ENCODE measurements at regions of chr3 and their contacts with region 1.

Region 1: DNA sequence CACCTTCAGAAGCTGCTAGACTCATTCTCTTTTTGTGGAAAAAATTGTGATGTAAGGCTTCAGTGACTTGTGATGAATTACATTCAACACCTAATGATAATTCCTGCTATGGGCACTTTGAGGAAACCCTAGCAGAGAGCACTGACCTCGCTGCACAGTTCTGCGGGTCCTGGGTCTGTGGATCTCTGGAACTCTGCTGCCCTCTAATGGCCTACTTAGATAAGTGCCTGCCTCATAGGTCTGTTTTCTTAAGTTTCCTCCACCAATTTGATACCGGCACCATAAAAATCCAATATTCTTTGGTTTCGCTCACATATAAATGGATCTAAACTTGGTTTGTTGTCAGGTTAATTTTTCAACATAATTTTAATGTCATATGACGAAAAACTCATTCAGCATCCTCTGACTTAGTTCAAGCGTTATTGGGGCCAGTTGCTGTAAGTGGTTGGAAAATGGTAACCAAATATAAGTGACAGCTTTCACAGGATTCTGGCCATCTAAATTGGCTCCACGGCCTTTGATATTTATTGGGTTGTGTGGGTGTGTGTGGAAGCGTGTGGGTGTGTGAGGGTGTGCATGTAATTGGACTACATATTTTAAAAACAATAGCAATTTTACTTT is 10.4 kb downstream of the SLITRK3 start:
- DNase-seq: peak; percentile 2
- H3K4me3 ChIP-seq: no peak overlapping the region
- H3K27ac ChIP-seq: no peak overlapping the region
- H3K27me3 ChIP-seq: no peaks in the 10 kb centered on the region
- CTCF ChIP-seq: peak; percentile 93

Region 2: GRCh38 chr3:165206454-165207266 is 20.8 kb after region 1 on chr3:
- CTCF ChIA-PET with region 1: interaction called, 35 read pairs
- POLR2A ChIA-PET with region 1: no interaction called
- DNase-seq: peak; percentile 16
- H3K4me3 ChIP-seq: peak overlapping the region; percentile 49
- H3K27ac ChIP-seq: no peak overlapping the region
- H3K27me3 ChIP-seq: no peaks in the 10 kb centered on the region
- CTCF ChIP-seq: peak; percentile 99

Region 3: DNA sequence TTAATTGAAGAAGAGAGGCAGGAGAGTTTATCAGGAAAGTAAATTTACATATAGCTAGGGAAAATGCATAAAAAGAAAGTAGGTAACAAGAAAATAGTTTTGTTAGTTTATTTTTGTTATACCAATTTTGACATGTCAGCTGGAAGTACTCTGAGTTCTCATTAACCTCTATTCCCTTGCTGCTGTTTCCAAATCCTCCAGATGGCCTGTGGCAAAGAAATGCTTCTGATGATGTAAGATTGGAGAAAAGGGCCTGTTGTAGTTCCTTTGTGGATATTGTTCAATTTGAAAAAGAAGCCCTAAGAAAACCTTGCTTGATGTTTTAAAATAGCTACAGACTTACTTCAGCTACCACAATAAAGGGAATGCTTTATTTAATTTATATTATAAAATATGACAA is 203.2 kb after region 1 on chr3:
- CTCF ChIA-PET with region 1: no interaction called
- POLR2A ChIA-PET with region 1: no interaction called
- DNase-seq: no peak
- H3K4me3 ChIP-seq: no peak overlapping the region
- H3K27ac ChIP-seq: no peak overlapping the region
- H3K27me3 ChIP-seq: no peaks in the 10 kb centered on the region
- CTCF ChIP-seq: no peak

Region 4: GRCh38 chr3:165835431-165835830 is 649.6 kb after region 1 on chr3:
- CTCF ChIA-PET with region 1: no interaction called
- POLR2A ChIA-PET with region 1: no interaction called
- DNase-seq: no peak
- H3K4me3 ChIP-seq: no peak overlapping the region
- H3K27ac ChIP-seq: no peak overlapping the region
- H3K27me3 ChIP-seq: no peaks in the 10 kb centered on the region
- CTCF ChIP-seq: no peak